ENCODE measurements at regions of chr7 and their contacts with region 1.

Region 1: DNA sequence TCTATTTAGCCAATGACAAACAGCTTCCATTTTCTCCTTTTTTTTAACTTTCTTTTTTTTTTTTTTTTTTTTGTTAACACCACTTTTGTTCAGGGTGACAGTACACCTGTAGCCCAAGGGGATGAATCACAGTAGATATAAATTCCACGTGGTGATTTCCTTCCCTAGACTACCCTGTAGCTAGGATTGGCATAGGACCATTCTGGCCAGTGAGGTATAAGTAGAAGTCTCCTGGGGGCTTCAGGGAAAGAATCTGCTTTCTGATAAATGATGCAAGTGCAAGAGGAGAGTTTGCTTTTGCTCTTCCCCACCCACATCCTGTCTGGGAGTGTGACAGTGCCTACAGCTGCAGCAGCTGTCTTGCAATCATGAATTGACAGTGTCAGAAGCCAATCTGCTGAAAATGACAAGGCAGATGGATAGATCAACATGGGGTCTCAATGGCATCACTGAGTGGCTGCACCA is 63.2 kb upstream of the TOMM7 start:
- DNase-seq: peak; percentile 88
- ATAC-seq: peak; percentile 90
- H3K4me3 ChIP-seq: no peak overlapping the region; the same call in 1 of the 2 replicates
- H3K27ac ChIP-seq: peak overlapping the region; percentile 91
- H3K4me1 ChIP-seq: peaks cover 15% of the 10 kb centered on the region
- H3K27me3 ChIP-seq: no peaks in the 10 kb centered on the region
- CTCF ChIP-seq: no peak
- EP300 ChIP-seq: peak; percentile 51 to 70; a peak in 2 of 4 replicates
- POLR2A ChIP-seq: peak; percentile 50
- RAD21 ChIP-seq: no peak

Region 2: GRCh38 chr7:22751341-22751740 is 134.5 kb before region 1 on chr7:
- CTCF ChIA-PET with region 1: no interaction called
- POLR2A ChIA-PET with region 1: no interaction called
- RAD21 ChIA-PET with region 1: no interaction called
- SMC1A ChIA-PET with region 1: no interaction called
- in situ Hi-C with region 1: no loop called
- intact Hi-C with region 1: no loop called
- DNase-seq: no peak
- ATAC-seq: no peak
- H3K4me3 ChIP-seq: no peak overlapping the region
- H3K27ac ChIP-seq: no peak overlapping the region
- H3K4me1 ChIP-seq: no peaks in the 10 kb centered on the region
- H3K27me3 ChIP-seq: no peaks in the 10 kb centered on the region
- CTCF ChIP-seq: no peak
- EP300 ChIP-seq: no peak
- POLR2A ChIP-seq: no peak
- RAD21 ChIP-seq: no peak

Region 3: GRCh38 chr7:22802426-22802825 is 83.4 kb before region 1 on chr7:
- CTCF ChIA-PET with region 1: no interaction called
- POLR2A ChIA-PET with region 1: no interaction called
- RAD21 ChIA-PET with region 1: no interaction called
- SMC1A ChIA-PET with region 1: no interaction called
- in situ Hi-C with region 1: no loop called
- intact Hi-C with region 1: no loop called
- DNase-seq: no peak
- ATAC-seq: no peak
- H3K4me3 ChIP-seq: no peak overlapping the region
- H3K27ac ChIP-seq: no peak overlapping the region
- H3K4me1 ChIP-seq: no peaks in the 10 kb centered on the region
- H3K27me3 ChIP-seq: no peaks in the 10 kb centered on the region
- CTCF ChIP-seq: no peak
- EP300 ChIP-seq: no peak
- POLR2A ChIP-seq: no peak
- RAD21 ChIP-seq: no peak

Region 4: GRCh38 chr7:22860784-22861482 is 24.9 kb before region 1 on chr7:
- CTCF ChIA-PET with region 1: interaction called, 24 read pairs
- POLR2A ChIA-PET with region 1: interaction called, 23 read pairs
- RAD21 ChIA-PET with region 1: interaction called, 40 read pairs
- SMC1A ChIA-PET with region 1: interaction called, 39 read pairs
- in situ Hi-C with region 1: no loop called
- intact Hi-C with region 1: loop called (anchors 1 kb)
- DNase-seq: no peak
- ATAC-seq: no peak
- H3K4me3 ChIP-seq: no peak overlapping the region
- H3K27ac ChIP-seq: peak overlapping the region; percentile 1; the same call in 1 of the 2 replicates
- H3K4me1 ChIP-seq: peaks cover 10% of the 10 kb centered on the region
- H3K27me3 ChIP-seq: no peaks in the 10 kb centered on the region
- CTCF ChIP-seq: peak; percentile 20 to 59 (median 59); a peak in 5 of 6 replicates
- EP300 ChIP-seq: no peak
- POLR2A ChIP-seq: no peak
- RAD21 ChIP-seq: no peak

Region 5: GRCh38 chr7:22867003-22867402 is 18.8 kb before region 1 on chr7:
- CTCF ChIA-PET with region 1: interaction called, 13 read pairs
- POLR2A ChIA-PET with region 1: interaction called, 61 read pairs
- RAD21 ChIA-PET with region 1: interaction called, 29 read pairs
- SMC1A ChIA-PET with region 1: interaction called, 78 read pairs
- in situ Hi-C with region 1: no loop called
- intact Hi-C with region 1: loop called (anchors 1 kb)
- DNase-seq: no peak
- ATAC-seq: no peak
- H3K4me3 ChIP-seq: no peak overlapping the region
- H3K27ac ChIP-seq: no peak overlapping the region
- H3K4me1 ChIP-seq: peaks cover 4% of the 10 kb centered on the region
- H3K27me3 ChIP-seq: no peaks in the 10 kb centered on the region
- CTCF ChIP-seq: no peak
- EP300 ChIP-seq: no peak
- POLR2A ChIP-seq: no peak
- RAD21 ChIP-seq: no peak

Region 6: DNA sequence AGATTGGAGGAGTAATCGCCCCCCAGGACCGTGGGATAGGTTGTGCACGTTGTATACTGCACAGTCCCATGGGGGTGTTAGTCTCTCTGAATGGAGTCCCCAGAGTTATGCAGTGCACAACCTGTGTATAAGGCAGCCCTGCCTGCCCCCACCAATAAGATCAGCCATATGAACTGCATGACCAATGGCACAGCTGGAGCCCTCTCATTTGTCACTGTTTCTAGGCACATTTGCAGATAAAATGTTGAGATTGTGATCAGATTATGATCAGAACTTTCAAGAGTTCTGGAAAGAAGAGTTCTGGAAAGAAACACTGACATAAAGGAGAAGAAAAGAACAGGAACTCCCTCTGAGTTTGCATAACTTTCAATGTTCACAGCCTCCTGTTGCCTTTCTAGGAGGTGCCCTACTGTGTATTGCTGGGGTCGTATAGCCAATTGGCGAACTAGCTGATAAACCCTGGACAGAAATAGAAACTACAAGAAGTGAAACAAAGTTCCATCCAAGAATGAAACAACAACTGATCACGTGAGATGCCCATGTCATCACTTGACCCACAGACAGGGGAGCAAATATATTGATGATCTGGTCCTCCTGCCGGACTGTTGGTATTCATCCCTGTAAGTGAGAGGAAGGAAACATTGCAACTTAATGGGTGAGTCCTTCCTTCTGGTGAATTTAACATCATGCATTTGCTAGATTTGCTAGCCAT is 13.6 kb before region 1 on chr7:
- CTCF ChIA-PET with region 1: interaction called, 13 read pairs
- POLR2A ChIA-PET with region 1: interaction called, 61 read pairs
- RAD21 ChIA-PET with region 1: interaction called, 29 read pairs
- SMC1A ChIA-PET with region 1: interaction called, 78 read pairs
- in situ Hi-C with region 1: no loop called
- intact Hi-C with region 1: loop called (anchors 1 kb)
- DNase-seq: peak; percentile 69
- ATAC-seq: peak; percentile 99
- H3K4me3 ChIP-seq: 0 out of 2 replicates have a peak overlapping the region, but pooled peaks have one; percentile 18
- H3K27ac ChIP-seq: peak overlapping the region; percentile 62
- H3K4me1 ChIP-seq: peaks cover 7% of the 10 kb centered on the region
- H3K27me3 ChIP-seq: no peaks in the 10 kb centered on the region
- CTCF ChIP-seq: no peak
- EP300 ChIP-seq: no peak
- POLR2A ChIP-seq: no peak; the same call in 1 of the 2 replicates
- RAD21 ChIP-seq: no peak

Region 7: DNA sequence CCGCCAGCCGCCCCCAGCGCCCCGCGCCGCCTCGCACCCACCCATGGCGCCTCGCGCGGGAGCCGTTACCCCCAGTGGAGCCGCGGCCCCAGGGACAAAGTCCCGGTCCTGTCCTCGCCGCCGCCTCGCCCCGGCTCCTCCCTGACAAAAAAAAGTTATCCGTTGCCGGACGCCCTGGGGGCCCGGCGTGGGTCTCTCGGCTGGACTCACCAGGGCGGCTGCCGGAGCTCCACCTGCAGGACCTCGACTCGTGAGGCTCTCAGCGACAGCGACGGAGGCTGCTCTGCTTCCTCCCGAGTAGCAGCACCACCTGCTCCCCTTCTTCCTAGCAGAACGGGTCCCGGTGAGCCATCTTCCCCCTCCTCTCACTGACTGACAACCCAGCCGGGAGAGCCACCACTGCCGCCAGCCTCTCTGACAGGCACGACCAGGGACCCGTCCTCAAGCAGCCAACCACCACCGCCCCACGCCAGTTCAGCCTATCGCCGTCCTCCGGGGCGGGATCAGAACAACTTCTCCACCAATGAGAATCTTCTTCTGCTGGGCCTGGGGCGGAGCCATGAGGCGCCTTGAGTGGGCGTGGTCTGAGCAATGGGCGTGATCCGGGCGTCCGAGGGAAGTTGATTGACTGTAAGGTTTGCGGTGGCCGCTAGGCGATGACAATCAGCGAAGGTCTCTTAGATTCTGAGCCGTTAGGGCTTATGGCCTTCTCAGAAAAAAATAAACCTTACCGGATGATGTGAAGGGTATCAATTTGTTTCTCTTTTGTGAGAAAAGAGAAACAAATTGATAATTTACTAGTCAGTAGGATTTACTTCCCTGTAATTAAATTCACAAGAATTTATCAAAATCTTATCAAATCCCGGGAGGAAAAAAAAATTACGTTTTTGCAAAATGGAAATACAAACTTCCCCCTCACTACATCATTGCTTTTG is 128.2 kb after region 1 on chr7 and contains the start of gene HYCC1:
- CTCF ChIA-PET with region 1: interaction called, 4 read pairs
- POLR2A ChIA-PET with region 1: interaction called, 8 read pairs
- RAD21 ChIA-PET with region 1: interaction called, 12 read pairs
- SMC1A ChIA-PET with region 1: interaction called, 5 read pairs
- in situ Hi-C with region 1: no loop called
- intact Hi-C with region 1: no loop called
- DNase-seq: peak; percentile 98
- ATAC-seq: peak; percentile 94
- H3K4me3 ChIP-seq: peak within 1 kb of the TSS; percentile 95
- H3K27ac ChIP-seq: peak within 1 kb of the TSS; percentile 74
- H3K4me1 ChIP-seq: peaks cover 20% of the 10 kb centered on the region
- H3K27me3 ChIP-seq: no peaks in the 10 kb centered on the region
- CTCF ChIP-seq: peak; percentile 62 to 64 (median 64)
- EP300 ChIP-seq: no peak
- POLR2A ChIP-seq: peak; percentile 99
- RAD21 ChIP-seq: peak; percentile 34; the same call in 1 of the 2 replicates
- polyA plus RNA-seq, gene HYCC1: 8.5 to 9.9 TPM